ENCODE measurements at regions of chr15 and their contacts with region 1.

Region 1: DNA sequence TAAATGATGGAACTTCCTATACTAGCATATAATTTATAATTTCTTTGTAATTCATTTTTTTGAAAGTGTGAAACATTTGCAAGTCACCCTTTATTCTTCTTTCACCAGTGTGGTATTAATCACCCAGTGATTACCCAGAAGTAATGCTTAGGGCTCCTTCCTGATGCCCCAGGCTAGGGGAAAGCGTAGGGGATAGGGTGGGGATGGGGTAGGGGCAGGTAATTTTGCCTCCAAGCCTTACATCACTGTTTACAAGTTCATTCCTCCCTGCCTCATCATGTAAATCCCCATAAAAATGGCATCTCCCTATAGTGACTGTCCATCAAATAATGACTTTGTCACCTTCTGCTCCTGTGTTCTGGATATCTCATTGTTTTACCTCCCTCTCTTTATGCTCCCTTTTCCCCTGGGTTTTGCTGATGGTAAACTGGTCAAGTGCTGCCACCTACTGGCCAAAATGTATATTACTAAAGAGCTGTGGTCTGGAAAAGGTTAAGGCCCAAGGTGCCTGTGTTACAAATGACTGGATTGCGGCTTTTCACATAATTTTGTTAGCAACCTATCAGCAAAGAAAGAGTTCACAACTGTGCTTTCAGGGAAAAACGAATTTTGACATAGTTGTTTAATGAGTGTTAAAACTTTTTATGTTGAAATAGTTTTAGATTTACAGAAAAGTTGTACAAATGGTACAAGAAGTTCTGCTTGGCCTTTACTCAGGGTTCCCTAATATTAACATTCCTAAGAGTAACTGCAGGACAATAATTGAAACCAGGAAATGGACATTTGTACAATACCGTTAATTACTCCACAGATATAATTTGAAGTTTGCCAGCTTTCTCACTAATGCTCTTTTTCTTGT is 54.7 kb downstream of the ONECUT1 start:
- DNase-seq: peak; percentile 83
- ATAC-seq: peak; percentile 90 to 96; a peak in 5 of 6 replicates
- H3K4me3 ChIP-seq: no peak overlapping the region
- H3K27ac ChIP-seq: no peak overlapping the region
- H3K4me1 ChIP-seq: no peaks in the 10 kb centered on the region
- CTCF ChIP-seq: peak; percentile 95
- EP300 ChIP-seq: no peak
- POLR2A ChIP-seq: no peak
- RAD21 ChIP-seq: peak; percentile 98 to 99

Region 2: DNA sequence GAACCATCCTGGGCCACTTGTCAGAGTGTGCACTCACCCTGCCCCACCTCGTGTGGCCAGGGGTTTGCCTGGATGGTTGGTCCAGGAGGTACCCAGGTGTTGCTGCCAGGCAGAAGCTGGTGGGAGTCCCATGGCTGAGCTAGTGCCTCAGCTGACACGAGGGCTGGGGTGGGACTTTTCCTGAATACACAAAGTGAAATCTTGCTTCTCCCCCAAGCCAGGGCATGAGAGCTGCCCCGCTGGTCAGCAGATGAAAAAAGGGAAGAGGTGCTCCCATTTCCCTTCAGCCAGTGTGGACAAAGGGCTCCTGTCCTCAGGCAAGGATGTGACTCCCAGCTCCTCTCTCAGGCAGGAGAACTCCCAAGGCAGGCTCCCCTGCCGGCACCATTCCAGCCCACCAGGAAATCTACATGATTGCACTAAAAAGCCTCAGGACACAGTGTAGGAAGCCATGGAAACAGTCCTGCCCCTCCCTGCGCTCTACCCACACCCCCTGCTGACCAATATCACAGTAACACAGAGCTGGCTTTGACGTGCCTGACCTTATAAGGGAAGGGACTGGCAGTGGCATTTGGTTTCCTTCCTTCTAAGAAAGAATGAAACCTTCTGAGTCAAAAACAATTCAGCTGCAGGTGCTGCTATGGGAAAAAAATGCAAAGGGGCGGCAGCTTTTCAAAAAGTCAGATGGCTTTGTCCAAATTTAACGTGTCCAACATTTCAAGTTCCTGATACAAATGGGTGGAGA is 473.8 kb before region 1 on chr15:
- CTCF ChIA-PET with region 1: interaction called, 180 read pairs
- POLR2A ChIA-PET with region 1: interaction called, 4 read pairs
- DNase-seq: peak; percentile 65 to 74
- ATAC-seq: peak; percentile 68 to 80; a peak in 5 of 6 replicates
- H3K4me3 ChIP-seq: no peak overlapping the region
- H3K27ac ChIP-seq: peak overlapping the region; percentile 21 to 67; a peak in 4 of 6 replicates
- H3K4me1 ChIP-seq: peaks cover 21% of the 10 kb centered on the region
- CTCF ChIP-seq: no peak
- EP300 ChIP-seq: no peak
- POLR2A ChIP-seq: no peak
- RAD21 ChIP-seq: no peak

Region 3: GRCh38 chr15:52331490-52332240 is 403.8 kb before region 1 on chr15:
- CTCF ChIA-PET with region 1: interaction called, 42 read pairs
- POLR2A ChIA-PET with region 1: no interaction called
- DNase-seq: peak; percentile 44 to 75
- ATAC-seq: peak; percentile 79 to 81
- H3K4me3 ChIP-seq: no peak overlapping the region
- H3K27ac ChIP-seq: 0 out of 6 replicates have a peak overlapping the region, but pooled peaks of 1 of the 2 experiments have one; percentile 2
- H3K4me1 ChIP-seq: peaks cover 46% of the 10 kb centered on the region
- CTCF ChIP-seq: peak; percentile 71
- EP300 ChIP-seq: no peak
- POLR2A ChIP-seq: no peak
- RAD21 ChIP-seq: peak; percentile 88 to 93

Region 4: DNA sequence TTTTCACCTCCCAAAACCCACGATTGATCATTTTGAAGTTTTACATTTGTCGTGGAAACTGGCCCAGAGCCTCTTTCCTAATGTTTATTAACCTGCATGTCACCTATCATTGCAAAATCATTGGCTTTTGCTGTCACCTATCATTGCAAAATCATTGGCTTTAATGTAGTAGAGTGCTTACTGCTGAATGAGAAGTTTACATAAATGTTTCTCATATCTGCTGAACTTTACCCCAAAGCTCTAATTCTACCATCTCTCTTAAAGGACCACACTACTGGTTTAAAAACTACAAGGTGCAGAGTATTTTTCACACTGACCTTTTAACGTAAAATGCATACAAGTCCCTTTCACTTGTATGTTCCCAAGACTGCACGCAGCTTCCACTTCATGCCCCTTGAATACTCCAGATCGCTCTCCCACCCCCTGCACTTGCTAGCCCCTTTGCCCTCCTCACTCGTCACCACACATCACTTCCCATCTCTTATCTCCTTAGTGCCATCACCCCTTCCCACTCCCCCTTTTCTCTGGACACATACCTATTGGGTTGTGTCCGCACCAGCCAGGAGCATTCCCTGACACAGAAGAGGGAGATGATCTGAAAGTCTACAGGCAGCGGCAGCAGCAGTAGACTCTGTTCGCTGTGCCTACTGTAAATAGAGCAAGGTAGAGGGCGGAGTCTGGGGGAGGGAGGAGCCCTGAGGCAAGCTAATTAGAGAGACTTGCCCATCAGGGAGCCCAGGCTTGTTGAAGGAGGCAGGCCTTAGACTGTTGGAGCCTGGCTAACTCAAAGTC is 26.1 kb before region 1 on chr15:
- CTCF ChIA-PET with region 1: interaction called, 17 read pairs
- POLR2A ChIA-PET with region 1: no interaction called
- DNase-seq: no peak
- ATAC-seq: peak; percentile 36 to 44; a peak in 3 of 6 replicates
- H3K4me3 ChIP-seq: no peak overlapping the region
- H3K27ac ChIP-seq: no peak overlapping the region
- H3K4me1 ChIP-seq: no peaks in the 10 kb centered on the region
- CTCF ChIP-seq: no peak
- EP300 ChIP-seq: no peak
- POLR2A ChIP-seq: no peak
- RAD21 ChIP-seq: no peak

Region 5: GRCh38 chr15:52717894-52718293 is 17.6 kb before region 1 on chr15:
- CTCF ChIA-PET with region 1: interaction called, 20 read pairs
- POLR2A ChIA-PET with region 1: interaction called, 11 read pairs
- DNase-seq: no peak
- ATAC-seq: peak; percentile 46 to 57; a peak in 3 of 6 replicates
- H3K4me3 ChIP-seq: no peak overlapping the region
- H3K27ac ChIP-seq: no peak overlapping the region
- H3K4me1 ChIP-seq: no peaks in the 10 kb centered on the region
- CTCF ChIP-seq: no peak
- EP300 ChIP-seq: no peak
- POLR2A ChIP-seq: no peak
- RAD21 ChIP-seq: no peak

Region 6: GRCh38 chr15:52745326-52746161 is 10.1 kb after region 1 on chr15:
- CTCF ChIA-PET with region 1: interaction called, 12 read pairs
- POLR2A ChIA-PET with region 1: no interaction called
- DNase-seq: no peak
- ATAC-seq: no peak
- H3K4me3 ChIP-seq: no peak overlapping the region
- H3K27ac ChIP-seq: no peak overlapping the region
- H3K4me1 ChIP-seq: peaks cover 13% of the 10 kb centered on the region; the same call in 2 of the 3 replicates
- CTCF ChIP-seq: no peak
- EP300 ChIP-seq: no peak
- POLR2A ChIP-seq: no peak
- RAD21 ChIP-seq: no peak

Region 7: DNA sequence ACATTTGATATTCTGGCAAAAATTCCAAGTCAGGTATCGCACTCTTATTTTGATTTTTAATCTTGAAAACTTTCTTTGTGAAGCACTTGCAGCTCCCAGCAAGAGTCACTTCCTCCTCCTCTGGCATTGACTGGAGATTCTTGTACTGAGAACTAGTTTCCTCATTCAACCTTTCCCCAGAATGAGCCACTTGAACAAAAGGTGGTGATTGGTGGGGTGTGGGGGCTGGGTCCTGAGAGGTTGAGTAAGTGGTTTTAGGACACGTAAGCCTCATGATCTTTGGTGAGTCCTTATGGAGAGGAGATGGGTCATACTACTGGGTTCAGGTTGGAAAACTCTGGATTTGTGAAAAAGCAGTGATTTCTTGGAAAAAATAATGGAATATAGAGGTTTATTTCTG is 87.0 kb after region 1 on chr15:
- CTCF ChIA-PET with region 1: no interaction called
- POLR2A ChIA-PET with region 1: no interaction called
- DNase-seq: no peak
- ATAC-seq: no peak
- H3K4me3 ChIP-seq: no peak overlapping the region
- H3K27ac ChIP-seq: no peak overlapping the region
- H3K4me1 ChIP-seq: no peaks in the 10 kb centered on the region
- CTCF ChIP-seq: no peak
- EP300 ChIP-seq: no peak
- POLR2A ChIP-seq: no peak
- RAD21 ChIP-seq: no peak